Common myeloid progenitor, CD34-positive (primary cell): ENCODE measurements at regions of chr1 and their contacts with region 1.

Region 1: DNA sequence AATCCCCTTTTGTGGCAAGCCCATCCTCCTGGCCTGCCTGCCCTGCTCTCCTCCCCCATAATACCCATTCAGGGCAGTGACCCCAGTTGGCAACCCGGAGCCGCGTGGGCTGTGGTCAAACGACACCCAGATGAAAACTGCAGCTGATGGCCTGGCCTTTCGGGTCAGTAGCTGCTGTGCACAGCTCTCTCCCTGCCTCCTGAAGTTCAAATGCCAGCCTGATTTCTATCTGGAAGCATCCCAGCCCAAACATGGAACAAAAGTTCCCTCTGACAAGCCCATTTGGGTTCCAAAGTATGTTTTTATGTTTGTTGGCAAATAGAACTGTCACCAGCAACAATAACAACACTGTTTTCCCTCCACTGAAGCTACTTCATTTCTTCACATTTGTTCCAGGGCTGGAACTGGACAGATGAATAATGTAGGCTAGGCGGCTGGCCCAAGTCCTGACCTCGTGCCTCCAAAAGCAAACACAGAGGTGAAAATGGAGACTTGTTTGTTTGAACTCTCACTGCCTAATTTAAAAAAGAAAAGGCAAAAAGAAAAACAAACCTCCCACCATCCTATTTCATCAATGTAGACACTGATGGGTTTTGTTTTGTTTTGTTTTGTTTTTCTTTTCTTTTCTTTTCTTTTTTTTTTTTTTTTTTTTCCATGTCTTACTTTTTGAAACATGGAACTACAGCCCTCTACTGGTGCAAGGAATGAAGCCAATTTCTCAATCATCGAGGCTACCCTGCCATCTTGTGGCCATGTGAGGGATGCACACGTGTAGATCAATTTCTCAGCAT is 179.0 kb downstream of the ADSS2 start:
- DNase-seq: peak; percentile 89 to 95 (median 91)
- H3K4me3 ChIP-seq: no peak overlapping the region
- H3K27ac ChIP-seq: no peak overlapping the region
- H3K4me1 ChIP-seq: peaks cover 0 to 14% (median 12%) of the 10 kb centered on the region in 4 experiments
- H3K27me3 ChIP-seq: no peaks in the 10 kb centered on the region

Region 2: DNA sequence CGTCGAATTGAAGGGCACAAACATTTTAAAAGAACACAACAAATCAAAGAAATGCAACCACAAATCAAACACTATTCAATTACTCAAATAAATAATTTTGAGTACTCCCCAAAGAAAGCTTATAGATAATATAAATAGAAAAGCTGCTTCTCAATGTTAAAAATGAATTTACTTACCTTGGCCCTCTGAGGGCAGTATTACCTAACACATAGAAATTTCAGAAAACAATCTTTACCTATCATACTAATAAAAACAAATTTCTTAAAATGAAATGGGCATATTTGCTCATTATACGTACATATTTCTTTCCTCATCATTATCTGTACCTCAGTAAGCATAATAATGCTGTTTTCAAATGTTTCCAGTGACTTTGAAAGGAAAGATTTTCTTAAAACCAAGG is 564.5 kb before region 1 on chr1:
- CTCF ChIA-PET with region 1: interaction called, 14 read pairs
- POLR2A ChIA-PET with region 1: no interaction called
- DNase-seq: peak; percentile 14 to 40 (median 36)
- H3K4me3 ChIP-seq: no peak overlapping the region
- H3K27ac ChIP-seq: no peak overlapping the region
- H3K4me1 ChIP-seq: peaks cover 0 to 6% (median under 1%) of the 10 kb centered on the region in 4 experiments
- H3K27me3 ChIP-seq: no peaks in the 10 kb centered on the region

Region 3: GRCh38 chr1:244599937-244600350 is 327.3 kb after region 1 on chr1:
- CTCF ChIA-PET with region 1: no interaction called
- POLR2A ChIA-PET with region 1: no interaction called
- DNase-seq: peak in 2 of 3 donors; percentile 6 to 25
- H3K4me3 ChIP-seq: no peak overlapping the region
- H3K27ac ChIP-seq: no peak overlapping the region
- H3K4me1 ChIP-seq: no peaks in the 10 kb centered on the region
- H3K27me3 ChIP-seq: peaks cover 0 to 3% (median 0%) of the 10 kb centered on the region in 5 experiments